Activated naive CD4-positive, alpha-beta T cell treated with anti-CD3 and anti-CD28 coated beads for 36 hours (primary cell): ENCODE measurements at regions of chr7 and their contacts with region 1.

Region 1: DNA sequence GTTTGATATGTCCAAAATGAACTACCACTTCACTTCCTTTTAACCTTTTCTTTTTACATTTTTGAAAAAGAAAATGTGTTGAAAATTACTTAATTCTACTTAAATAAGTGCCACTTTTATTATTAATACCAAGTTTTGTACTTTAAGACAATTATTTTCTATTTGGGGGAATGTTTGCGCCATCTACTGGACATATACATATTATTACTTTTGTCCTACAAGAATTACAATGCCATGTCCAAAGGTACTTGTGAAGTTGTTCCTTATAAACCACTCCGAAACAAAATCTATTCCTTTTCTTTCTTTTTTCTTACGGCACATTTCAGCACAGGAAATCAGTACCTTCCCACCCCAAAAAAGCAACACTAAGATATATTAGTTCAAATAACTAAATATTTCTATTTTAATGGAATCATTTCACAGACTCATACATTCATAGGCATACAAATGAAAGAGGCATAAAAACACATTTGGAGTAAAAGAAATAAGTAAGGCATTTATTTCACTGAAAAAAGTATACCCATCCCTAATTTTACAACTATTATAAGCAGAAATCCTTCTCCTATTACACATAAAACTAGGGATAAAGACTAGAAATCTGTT is 169.9 kb downstream of the RNF133 start:
- DNase-seq: no peak
- H3K4me3 Mint-ChIP-seq: no peak overlapping the region
- H3K27ac Mint-ChIP-seq: no peak overlapping the region
- H3K4me1 Mint-ChIP-seq: no peaks in the 10 kb centered on the region
- H3K27me3 Mint-ChIP-seq: no peaks in the 10 kb centered on the region

Region 2: DNA sequence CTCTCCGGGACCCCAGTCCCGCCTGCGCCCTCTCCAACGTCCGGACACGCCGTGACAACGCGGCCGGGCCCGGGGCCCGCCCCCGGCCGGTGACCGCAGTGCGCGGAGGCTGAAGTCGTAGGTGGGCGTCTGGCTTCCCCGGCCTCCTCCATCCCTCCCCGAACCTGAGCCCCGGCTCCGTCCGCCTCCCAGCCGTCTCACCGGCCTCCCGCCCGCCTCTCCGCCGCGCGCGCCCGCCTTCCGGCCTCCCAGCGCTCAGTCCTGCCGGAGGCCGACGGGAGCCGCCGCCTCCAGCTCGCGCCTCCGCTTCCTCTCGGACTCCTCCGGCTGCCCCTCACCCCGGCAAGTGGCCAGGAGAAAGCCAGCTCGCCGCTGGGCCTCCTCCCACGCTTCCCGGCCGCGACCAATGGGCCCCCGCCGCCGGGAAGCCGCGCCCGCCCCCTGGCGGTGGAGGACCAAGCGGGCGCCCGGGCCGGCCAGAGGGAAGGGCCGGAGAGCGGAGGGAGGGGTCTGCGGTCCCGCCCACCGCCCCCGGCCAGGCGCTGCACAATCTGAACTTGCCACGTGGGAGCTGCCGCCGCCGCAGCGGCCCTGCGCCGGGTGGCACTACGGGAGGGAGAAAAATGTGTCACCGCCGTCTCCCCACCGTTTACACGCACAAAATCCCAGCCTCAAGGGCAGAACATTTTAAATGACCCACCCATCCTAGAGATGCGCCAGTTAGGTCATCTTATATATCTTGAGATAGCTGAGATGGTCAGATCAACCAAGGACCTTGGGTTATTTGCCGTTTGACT is 1132.8 kb before region 1 on chr7 and contains the start of gene FAM3C:
- CTCF ChIA-PET with region 1: no interaction called
- intact Hi-C with region 1: no loop called
- DNase-seq: peak; percentile 85
- H3K4me3 Mint-ChIP-seq: peak within 1 kb of the TSS; percentile 82
- H3K27ac Mint-ChIP-seq: peak within 1 kb of the TSS; percentile 88
- H3K4me1 Mint-ChIP-seq: peaks cover 33% of the 10 kb centered on the region
- H3K27me3 Mint-ChIP-seq: no peaks in the 10 kb centered on the region
- total RNA-seq, gene FAM3C: 11.5 to 13.9 TPM

Region 3: DNA sequence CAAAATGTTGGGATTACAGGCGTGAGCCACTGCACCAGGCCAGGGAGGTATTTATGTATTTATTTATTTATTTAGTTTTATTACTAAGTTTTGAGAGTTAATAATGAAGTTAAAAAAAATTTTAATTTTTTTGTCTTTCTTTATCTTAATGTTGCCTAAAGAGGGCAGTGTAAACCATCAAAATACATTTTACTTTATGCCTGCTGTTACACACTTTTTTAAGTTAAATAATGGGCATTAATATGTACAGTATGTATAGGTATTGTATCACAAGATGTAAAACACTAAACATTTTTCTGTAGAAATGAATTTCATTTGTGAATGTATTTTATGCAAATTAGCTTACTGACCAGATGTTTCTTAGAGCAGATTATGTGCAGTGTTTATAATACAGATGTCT is 514.3 kb before region 1 on chr7:
- CTCF ChIA-PET with region 1: no interaction called
- intact Hi-C with region 1: loop called (anchors 10 kb)
- DNase-seq: no peak
- H3K4me3 Mint-ChIP-seq: no peak overlapping the region
- H3K27ac Mint-ChIP-seq: no peak overlapping the region
- H3K4me1 Mint-ChIP-seq: no peaks in the 10 kb centered on the region
- H3K27me3 Mint-ChIP-seq: no peaks in the 10 kb centered on the region

Region 4: DNA sequence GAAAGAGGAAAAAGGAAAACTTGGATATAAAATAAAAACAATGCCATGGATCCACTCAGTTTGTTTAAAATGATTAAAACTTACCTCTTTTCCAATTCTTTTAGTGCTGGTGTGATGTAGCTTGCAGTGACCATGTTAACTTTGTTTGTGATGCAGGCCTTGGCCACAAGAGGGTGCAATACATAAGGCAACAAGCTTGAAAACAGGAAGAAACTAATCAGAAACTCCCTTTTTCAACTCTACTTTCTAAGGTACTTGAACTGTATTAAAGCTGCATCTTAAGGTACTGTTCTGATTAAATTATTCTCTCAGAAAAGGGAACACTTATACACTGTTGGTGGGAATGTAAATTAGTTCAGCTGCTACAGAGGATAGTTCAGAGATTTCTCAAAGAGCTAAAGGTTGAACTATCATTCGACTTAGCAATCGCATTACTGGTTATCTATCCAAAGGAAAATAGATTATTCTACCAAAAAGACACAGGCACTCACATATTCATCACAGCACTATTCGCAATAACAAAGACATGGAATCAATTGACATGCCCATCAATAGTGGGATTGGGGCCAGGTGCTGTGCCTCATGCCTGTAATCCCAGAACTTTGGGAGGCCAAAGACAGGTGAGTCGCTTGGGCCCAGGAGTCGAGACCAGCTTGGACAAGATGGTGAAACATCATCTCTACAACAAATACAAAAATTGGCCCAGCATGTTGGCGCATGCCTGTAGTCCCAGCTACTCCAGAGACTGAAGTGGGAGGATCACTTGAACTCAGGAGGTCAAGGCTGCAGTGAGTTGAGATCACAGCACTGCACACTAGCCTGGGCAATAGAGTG is 435.8 kb before region 1 on chr7:
- CTCF ChIA-PET with region 1: interaction called, 3 read pairs
- intact Hi-C with region 1: loop called (anchors 1 kb)
- DNase-seq: peak; percentile 74
- H3K4me3 Mint-ChIP-seq: no peak overlapping the region
- H3K27ac Mint-ChIP-seq: no peak overlapping the region
- H3K4me1 Mint-ChIP-seq: no peaks in the 10 kb centered on the region
- H3K27me3 Mint-ChIP-seq: no peaks in the 10 kb centered on the region

Region 5: DNA sequence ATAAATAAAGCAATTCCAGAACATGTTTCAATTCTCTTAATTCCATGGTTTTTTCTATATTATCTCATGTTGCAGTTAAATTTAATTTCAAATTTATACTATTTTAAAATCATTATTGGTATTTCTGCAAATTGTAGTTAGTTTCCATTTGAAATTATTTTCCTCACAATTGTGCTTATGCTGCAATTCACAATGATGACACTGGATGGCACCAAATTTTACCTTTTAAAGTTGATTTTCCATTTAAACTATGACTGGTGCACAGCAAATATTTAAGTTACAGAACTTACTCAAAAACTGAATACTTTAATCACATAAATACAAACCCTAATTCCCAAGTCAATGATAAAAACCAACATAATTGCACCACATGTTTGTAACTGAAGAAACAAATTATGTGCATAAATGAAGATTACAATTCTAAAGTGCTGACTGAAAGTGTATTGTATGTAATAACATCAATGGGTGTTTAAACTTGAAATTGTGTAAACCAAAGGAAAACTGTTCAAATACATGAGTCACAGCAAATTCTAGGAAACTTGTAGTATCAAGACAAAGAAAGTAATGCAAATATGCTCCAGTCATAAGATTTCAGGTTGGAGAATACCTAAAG is 309.6 kb before region 1 on chr7:
- CTCF ChIA-PET with region 1: interaction called, 3 read pairs
- intact Hi-C with region 1: loop called (anchors 1 kb)
- DNase-seq: no peak
- H3K4me3 Mint-ChIP-seq: no peak overlapping the region
- H3K27ac Mint-ChIP-seq: no peak overlapping the region
- H3K4me1 Mint-ChIP-seq: no peaks in the 10 kb centered on the region
- H3K27me3 Mint-ChIP-seq: no peaks in the 10 kb centered on the region

Region 6: DNA sequence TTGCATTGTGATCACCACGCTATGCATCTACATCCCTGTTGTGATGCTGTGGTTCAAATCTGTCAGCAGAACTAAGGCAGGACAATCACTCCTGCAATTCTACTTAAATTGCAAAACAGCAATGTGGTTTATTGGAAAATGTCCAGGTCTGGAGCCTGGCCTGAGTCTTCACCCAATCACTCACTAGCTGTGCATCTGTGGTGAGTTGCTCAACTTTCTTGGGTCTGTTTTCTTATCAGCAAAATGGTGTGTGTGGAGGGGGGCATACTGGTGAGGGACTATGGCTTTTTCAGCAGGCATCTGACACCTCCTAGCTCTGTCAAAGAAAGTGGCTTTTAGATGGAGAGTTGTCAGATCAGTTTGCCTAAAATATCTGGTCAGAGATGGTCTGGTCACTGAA is 116.1 kb before region 1 on chr7:
- CTCF ChIA-PET with region 1: no interaction called
- intact Hi-C with region 1: no loop called
- DNase-seq: no peak
- H3K4me3 Mint-ChIP-seq: no peak overlapping the region
- H3K27ac Mint-ChIP-seq: no peak overlapping the region
- H3K4me1 Mint-ChIP-seq: no peaks in the 10 kb centered on the region
- H3K27me3 Mint-ChIP-seq: no peaks in the 10 kb centered on the region